ENCODE measurements at regions of chr5 and their contacts with region 1.

Region 1: DNA sequence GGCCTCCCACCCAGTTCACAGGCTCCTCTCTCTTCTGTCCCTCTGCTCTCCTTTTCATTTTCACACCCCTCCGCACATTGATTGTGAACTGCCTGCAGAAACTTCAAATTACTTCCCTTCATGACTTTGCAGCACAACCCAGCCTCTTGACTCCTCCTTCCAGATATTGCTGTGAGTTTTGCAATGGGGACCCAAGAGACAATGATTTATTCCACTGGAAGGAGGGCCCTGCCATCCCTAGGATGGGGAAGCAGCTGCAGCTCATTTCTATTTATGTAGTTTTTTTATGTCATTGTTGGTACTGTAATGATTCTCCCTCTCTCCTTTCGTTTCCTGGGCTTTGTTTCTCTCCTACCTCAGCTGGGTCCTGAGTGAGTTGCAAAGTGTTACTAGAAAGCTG is 364.9 kb downstream of the ICE1 start:
- DNase-seq: no peak
- ATAC-seq: no peak
- H3K4me3 ChIP-seq: no peak overlapping the region
- H3K27ac ChIP-seq: no peak overlapping the region
- H3K4me1 ChIP-seq: no peaks in the 10 kb centered on the region
- H3K27me3 ChIP-seq: no peaks in the 10 kb centered on the region
- CTCF ChIP-seq: no peak
- POLR2A ChIP-seq: no peak
- RAD21 ChIP-seq: no peak

Region 2: DNA sequence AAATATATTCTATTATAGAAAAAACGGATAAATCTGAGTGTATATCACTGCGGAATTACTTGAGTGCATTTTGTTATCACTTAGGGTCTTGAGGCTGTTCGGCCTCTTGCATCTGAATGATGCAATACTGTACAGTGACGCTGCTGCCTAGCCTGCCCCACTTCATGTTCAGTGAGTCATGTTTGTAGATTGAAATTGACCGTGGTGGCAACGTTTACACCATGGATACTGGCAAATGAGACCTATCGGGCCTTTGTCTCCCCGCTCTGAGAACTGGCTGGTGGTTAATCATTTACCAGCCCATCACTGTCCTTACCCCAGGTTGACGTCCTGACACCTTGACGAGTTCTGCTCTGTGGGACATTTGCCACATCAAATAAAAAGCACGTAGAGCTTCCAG is 1157.3 kb before region 1 on chr5:
- CTCF ChIA-PET with region 1: no interaction called
- POLR2A ChIA-PET with region 1: no interaction called
- dilution Hi-C with region 1: no loop called
- in situ Hi-C with region 1: no loop called
- intact Hi-C with region 1: loop called (anchors 10 kb)
- DNase-seq: no peak
- ATAC-seq: no peak
- H3K4me3 ChIP-seq: no peak overlapping the region
- H3K27ac ChIP-seq: no peak overlapping the region
- H3K4me1 ChIP-seq: no peaks in the 10 kb centered on the region
- H3K27me3 ChIP-seq: no peaks in the 10 kb centered on the region
- CTCF ChIP-seq: no peak
- POLR2A ChIP-seq: no peak
- RAD21 ChIP-seq: no peak

Measured in IMR-90 (cell line).